Prostate gland (tissue), 2 donors: ENCODE measurements at regions of chr7 and their contacts with region 1.

Region 1: GRCh38 chr7:26376175-26376917 is 84.7 kb downstream of the SNX10 start:
- DNase-seq: no peak
- H3K4me3 ChIP-seq: peak overlapping the region; percentile 22 to 37
- H3K27ac ChIP-seq: no peak overlapping the region
- H3K4me1 ChIP-seq: no peaks in the 10 kb centered on the region
- H3K27me3 ChIP-seq: no peaks in the 10 kb centered on the region
- CTCF ChIP-seq: no peak
- POLR2A ChIP-seq: no peak

Region 2: GRCh38 chr7:25862260-25863037 is 513.9 kb before region 1 on chr7:
- intact Hi-C with region 1: loop called (anchors 10 kb)
- DNase-seq: peak; percentile 43
- H3K4me3 ChIP-seq: no peak overlapping the region
- H3K27ac ChIP-seq: no peak overlapping the region
- H3K4me1 ChIP-seq: no peaks in the 10 kb centered on the region
- H3K27me3 ChIP-seq: peaks cover 53% of the 10 kb centered on the region
- CTCF ChIP-seq: no peak
- POLR2A ChIP-seq: no peak

Region 3: DNA sequence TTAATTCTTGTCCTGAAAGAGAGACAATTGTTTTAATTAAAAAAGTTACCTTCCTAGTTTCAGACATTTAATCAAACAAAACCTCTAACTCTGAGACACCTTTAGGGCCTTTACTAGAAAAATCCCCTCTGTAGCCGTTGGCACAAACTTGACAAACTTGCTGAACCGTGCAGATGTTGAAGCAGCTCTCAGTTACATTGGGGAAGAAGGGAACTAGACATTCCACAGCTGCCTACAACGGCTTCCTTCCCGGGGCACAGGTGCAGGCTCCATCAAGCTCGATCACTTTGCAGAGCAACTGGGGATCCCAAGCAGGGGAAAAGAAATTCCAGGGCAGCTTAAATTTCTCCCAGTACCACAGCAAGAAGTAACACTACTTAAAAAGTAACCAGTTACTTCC is 346.8 kb after region 1 on chr7:
- intact Hi-C with region 1: no loop called
- DNase-seq: no peak
- H3K4me3 ChIP-seq: no peak overlapping the region
- H3K27ac ChIP-seq: no peak overlapping the region
- H3K4me1 ChIP-seq: no peaks in the 10 kb centered on the region
- H3K27me3 ChIP-seq: no peaks in the 10 kb centered on the region
- CTCF ChIP-seq: no peak
- POLR2A ChIP-seq: no peak